ENCODE measurements at regions of chr1 and their contacts with region 1.

Region 1: DNA sequence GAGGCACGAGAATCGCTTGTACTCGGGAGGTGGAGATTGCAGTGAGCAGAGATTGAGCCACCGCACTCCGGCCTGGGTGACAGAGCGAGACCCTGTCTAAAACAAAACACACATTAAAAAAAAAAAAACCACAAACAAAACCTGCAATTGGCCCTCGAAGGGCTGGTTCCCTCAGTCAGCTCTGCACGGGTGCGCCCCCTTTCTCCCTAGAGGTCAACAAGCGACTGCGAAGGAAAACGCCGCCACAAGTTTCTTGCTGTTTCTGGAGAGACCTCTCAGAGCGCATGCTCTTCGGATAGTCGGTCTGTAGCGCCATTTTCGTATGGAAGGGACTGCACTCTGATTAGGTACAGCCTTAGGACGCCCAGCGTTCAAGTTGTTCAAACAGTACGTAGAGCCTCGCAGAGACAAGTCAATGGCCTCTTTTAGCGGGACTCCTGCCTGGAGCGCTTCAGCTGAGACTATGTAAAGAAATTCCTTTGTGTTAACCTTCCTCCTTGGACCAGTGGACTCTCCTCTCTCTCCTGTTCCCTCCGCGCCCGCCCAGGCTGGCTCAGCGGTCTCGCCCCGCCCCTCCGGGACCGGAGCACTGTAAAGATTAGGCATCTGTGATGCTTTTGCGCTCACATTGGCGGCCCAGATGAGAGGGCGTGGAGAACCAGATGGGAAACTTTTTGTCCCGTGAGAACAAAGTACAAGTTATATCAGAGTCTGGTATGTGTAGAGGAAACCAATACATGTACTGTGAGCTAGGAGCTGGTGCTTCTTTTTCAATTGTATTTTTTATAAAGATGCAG is 1.0 kb upstream of the CDC14A start:
- DNase-seq: peak; percentile 84
- H3K4me3 Mint-ChIP-seq: peak overlapping the region; percentile 87
- H3K27ac Mint-ChIP-seq: peak overlapping the region; percentile 89
- H3K4me1 Mint-ChIP-seq: peaks cover 35% of the 10 kb centered on the region
- H3K27me3 Mint-ChIP-seq: peaks cover 4% of the 10 kb centered on the region

Region 2: GRCh38 chr1:99818063-99818699 is 533.1 kb before region 1 on chr1:
- intact Hi-C with region 1: loop called (anchors 10 kb)
- DNase-seq: no peak
- H3K4me3 Mint-ChIP-seq: no peak overlapping the region
- H3K27ac Mint-ChIP-seq: no peak overlapping the region
- H3K4me1 Mint-ChIP-seq: peaks cover 16% of the 10 kb centered on the region
- H3K27me3 Mint-ChIP-seq: peaks cover 14% of the 10 kb centered on the region

Region 3: GRCh38 chr1:100400404-100400803 is 49.1 kb after region 1 on chr1:
- intact Hi-C with region 1: loop called (anchors 2 kb)
- DNase-seq: peak; percentile 56
- H3K4me3 Mint-ChIP-seq: peak overlapping the region; percentile 48
- H3K27ac Mint-ChIP-seq: peak overlapping the region; percentile 90
- H3K4me1 Mint-ChIP-seq: peaks cover 68% of the 10 kb centered on the region
- H3K27me3 Mint-ChIP-seq: no peaks in the 10 kb centered on the region